Right cardiac atrium (tissue), 5 donors: ENCODE measurements at regions of chr21 and their contacts with region 1.

Region 1: GRCh38 chr21:17903029-17903806 is 84.1 kb upstream of the C21orf91 start:
- DNase-seq: no peak
- ATAC-seq: no peak
- H3K4me3 ChIP-seq: no peak overlapping the region
- H3K27ac ChIP-seq: no peak overlapping the region
- H3K4me1 ChIP-seq: peaks cover 3% of the 10 kb centered on the region
- H3K27me3 ChIP-seq: no peaks in the 10 kb centered on the region

Region 2: DNA sequence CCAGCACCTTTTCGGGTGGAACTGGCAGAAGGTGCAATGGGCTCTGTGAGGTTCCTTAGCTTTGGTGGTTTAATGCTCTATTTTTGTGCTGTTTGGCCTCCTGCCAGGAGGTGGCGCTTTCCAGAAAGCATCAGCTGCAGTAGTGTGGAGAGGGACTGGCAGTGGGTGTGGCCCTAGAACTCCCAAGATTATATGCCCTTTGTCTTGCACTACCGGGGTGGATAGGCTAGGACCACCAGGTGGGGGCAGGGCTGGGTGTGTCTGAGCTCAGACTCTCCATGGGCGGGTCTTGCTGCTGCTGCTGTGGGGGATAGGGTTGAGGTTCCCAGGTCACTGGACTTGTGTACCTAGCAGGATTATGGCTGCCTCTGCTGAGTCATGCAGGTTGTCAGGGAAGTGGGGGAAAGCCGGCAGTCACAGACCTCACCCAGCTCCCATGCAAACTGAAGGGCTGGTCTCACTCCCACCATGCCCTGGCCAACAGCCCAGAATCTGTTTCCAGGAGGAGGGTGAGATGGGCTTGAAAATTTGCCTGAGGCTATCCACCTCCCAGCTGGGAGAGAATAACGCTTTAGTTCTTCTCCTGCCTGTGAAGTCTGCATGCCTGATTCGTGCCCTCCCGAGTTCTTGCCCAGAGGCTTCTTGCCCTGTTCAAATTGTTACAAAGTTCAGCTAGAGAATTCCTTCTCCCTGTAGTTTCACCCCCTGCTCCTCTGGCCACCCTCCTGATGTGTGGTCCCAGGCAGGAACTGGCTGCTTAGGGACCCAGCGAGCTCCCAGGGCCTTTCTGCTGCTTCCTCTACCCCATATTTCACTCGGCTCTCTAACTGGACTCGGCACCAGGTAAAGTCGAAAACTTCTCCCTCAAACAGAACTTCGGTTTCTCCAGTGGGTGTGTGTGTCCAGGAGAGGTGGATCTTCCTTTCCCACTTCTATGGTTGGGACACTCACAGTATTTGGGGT is 214.0 kb before region 1 on chr21:
- intact Hi-C with region 1: loop called in 1 of 4 experiments (anchors 10 kb)
- DNase-seq: peak; percentile 56 to 74 (median 64)
- ATAC-seq: peak; percentile 63 to 92
- H3K4me3 ChIP-seq: no peak overlapping the region
- H3K27ac ChIP-seq: no peak overlapping the region
- H3K4me1 ChIP-seq: peaks cover 2% of the 10 kb centered on the region
- H3K27me3 ChIP-seq: no peaks in the 10 kb centered on the region